Left ventricle myocardium inferior (tissue), 1 donor: ENCODE measurements at regions of chr3 and their contacts with region 1.

Region 1: GRCh38 chr3:170414202-170414663 is 4.4 kb upstream of the CLDN11 start:
- DNase-seq: no peak
- H3K4me3 ChIP-seq: no peak overlapping the region
- H3K27ac ChIP-seq: no peak overlapping the region
- H3K4me1 ChIP-seq: peaks cover 14% of the 10 kb centered on the region
- H3K27me3 ChIP-seq: peaks cover 30% of the 10 kb centered on the region
- CTCF ChIP-seq: peak; percentile 96

Region 2: DNA sequence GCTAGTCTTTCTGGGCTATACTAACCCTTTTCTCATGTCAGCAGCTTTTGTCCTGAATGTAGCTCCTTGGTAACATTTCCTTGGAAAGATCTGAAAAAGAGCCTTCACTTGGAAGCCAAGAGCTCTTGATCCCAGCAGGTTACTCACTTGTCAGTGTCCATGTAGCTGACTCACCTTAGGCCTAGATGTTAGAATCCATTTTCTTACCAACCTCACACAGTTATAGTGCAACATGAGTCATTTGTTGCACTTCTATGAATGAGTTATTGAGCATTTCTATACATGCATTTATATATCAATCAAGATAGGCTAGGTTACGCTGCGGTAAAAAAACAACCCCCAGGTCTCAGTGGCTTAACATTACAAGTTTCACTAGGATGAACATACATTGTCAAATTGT is 278.5 kb after region 1 on chr3:
- intact Hi-C with region 1: loop called (anchors 2 kb)
- DNase-seq: no peak
- H3K4me3 ChIP-seq: no peak overlapping the region
- H3K27ac ChIP-seq: no peak overlapping the region
- H3K4me1 ChIP-seq: peaks cover 14% of the 10 kb centered on the region
- H3K27me3 ChIP-seq: no peaks in the 10 kb centered on the region
- CTCF ChIP-seq: no peak

Region 3: DNA sequence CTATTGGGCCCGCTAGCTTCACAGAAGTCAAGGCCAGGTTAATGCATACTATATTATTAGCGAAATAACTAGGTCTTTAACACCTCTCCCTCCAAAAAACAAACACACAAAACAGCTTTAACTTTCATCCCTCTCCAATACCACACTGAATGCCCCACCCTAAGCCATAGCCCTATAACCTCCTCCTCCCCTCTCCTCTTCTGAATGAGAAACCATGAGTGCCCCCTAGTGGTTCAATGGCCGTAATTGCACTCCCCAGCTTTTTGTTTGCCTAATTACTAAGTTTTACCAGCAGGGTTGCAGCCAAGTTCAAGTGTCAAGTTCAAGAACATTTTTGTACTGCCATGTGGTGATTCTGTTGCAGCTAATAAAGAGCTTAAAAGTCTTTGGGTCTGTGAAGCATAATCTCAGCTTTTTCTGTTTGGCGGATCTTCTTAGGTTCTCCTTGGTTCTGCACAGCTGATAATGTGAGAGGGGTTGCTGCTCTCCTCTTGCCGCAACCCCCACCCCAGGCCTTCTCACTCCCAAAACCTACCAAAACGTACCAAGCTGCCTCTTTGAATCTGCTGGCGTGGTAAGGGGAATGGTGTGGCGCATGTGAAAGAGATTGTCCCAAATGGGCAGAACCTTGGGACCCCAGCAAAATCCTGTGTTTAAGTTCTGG is 397.8 kb after region 1 on chr3:
- intact Hi-C with region 1: loop called (anchors 2 kb)
- DNase-seq: peak; percentile 37
- H3K4me3 ChIP-seq: no peak overlapping the region
- H3K27ac ChIP-seq: no peak overlapping the region
- H3K4me1 ChIP-seq: peaks cover 4% of the 10 kb centered on the region
- H3K27me3 ChIP-seq: peaks cover under 1% of the 10 kb centered on the region
- CTCF ChIP-seq: peak; percentile 90